GM12878 (cell line): ENCODE measurements at regions of chr1 and their contacts with region 1.

Region 1: GRCh38 chr1:182789138-182790076 is at the start of gene NPL:
- DNase-seq: peak; percentile 34
- ATAC-seq: peak; percentile 97
- H3K4me3 ChIP-seq: peak within 1 kb of the TSS; percentile 59
- H3K27ac ChIP-seq: no peak within 1 kb of the TSS
- H3K4me1 ChIP-seq: peaks cover 7% of the 10 kb centered on the region; the same call in 1 of the 2 replicates
- H3K27me3 ChIP-seq: no peaks in the 10 kb centered on the region
- CTCF ChIP-seq: no peak
- EP300 ChIP-seq: no peak
- POLR2A ChIP-seq: peak; percentile 99
- RAD21 ChIP-seq: no peak
- polyA plus RNA-seq, gene NPL: 12.6 to 15.1 TPM

Region 2: GRCh38 chr1:182446033-182446669 is 343.3 kb before region 1 on chr1:
- CTCF ChIA-PET with region 1: interaction called, 35 read pairs
- POLR2A ChIA-PET with region 1: no interaction called
- RAD21 ChIA-PET with region 1: interaction called, 24 read pairs
- SMC1A ChIA-PET with region 1: interaction called, 6 read pairs
- in situ Hi-C with region 1: loop called (anchors 5 kb)
- intact Hi-C with region 1: no loop called
- DNase-seq: peak; percentile 26
- ATAC-seq: peak; percentile 87
- H3K4me3 ChIP-seq: no peak overlapping the region
- H3K27ac ChIP-seq: no peak overlapping the region
- H3K4me1 ChIP-seq: peaks cover 15% of the 10 kb centered on the region
- H3K27me3 ChIP-seq: no peaks in the 10 kb centered on the region
- CTCF ChIP-seq: peak; percentile 60 to 80 (median 61)
- EP300 ChIP-seq: no peak
- POLR2A ChIP-seq: no peak
- RAD21 ChIP-seq: peak; percentile 90

Region 3: DNA sequence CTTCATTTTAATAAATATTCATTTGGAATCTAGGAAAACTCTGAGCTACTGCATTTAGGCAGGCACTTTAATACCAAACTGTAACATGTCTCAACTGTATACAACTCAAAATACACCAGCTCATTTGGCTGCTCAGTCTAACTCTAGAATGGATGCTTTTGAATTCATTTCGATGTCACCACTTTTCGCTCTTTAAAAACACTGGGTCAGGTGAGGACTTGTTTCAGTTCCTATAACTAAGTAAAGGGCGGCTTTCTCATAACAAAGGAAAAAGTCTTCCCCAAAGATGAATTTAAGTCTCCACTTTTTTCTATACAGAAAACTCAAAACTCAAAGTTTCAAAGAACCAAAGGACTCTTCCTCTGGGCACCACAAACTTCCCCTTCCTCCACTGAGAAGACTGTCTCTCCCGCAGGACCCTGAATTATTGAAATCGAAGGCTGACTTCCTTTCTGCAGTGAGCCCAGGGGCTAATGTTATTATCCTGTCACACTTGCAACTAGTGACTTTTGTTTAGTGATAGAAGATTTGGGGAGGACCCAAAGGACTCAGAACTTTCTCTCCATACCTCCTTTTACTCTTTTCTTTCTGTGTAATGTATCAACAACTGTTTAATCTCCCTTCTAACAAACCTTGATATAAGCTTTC is 40.0 kb after region 1 on chr1:
- CTCF ChIA-PET with region 1: interaction called, 7 read pairs
- POLR2A ChIA-PET with region 1: interaction called, 6 read pairs
- RAD21 ChIA-PET with region 1: interaction called, 11 read pairs
- SMC1A ChIA-PET with region 1: interaction called, 6 read pairs
- in situ Hi-C with region 1: no loop called
- intact Hi-C with region 1: no loop called
- DNase-seq: peak; percentile 21
- ATAC-seq: peak; percentile 95
- H3K4me3 ChIP-seq: peak overlapping the region; percentile 46; the same call in 1 of the 2 replicates
- H3K27ac ChIP-seq: no peak overlapping the region
- H3K4me1 ChIP-seq: no peaks in the 10 kb centered on the region
- H3K27me3 ChIP-seq: no peaks in the 10 kb centered on the region
- CTCF ChIP-seq: no peak
- EP300 ChIP-seq: no peak
- POLR2A ChIP-seq: no peak
- RAD21 ChIP-seq: no peak

Region 4: DNA sequence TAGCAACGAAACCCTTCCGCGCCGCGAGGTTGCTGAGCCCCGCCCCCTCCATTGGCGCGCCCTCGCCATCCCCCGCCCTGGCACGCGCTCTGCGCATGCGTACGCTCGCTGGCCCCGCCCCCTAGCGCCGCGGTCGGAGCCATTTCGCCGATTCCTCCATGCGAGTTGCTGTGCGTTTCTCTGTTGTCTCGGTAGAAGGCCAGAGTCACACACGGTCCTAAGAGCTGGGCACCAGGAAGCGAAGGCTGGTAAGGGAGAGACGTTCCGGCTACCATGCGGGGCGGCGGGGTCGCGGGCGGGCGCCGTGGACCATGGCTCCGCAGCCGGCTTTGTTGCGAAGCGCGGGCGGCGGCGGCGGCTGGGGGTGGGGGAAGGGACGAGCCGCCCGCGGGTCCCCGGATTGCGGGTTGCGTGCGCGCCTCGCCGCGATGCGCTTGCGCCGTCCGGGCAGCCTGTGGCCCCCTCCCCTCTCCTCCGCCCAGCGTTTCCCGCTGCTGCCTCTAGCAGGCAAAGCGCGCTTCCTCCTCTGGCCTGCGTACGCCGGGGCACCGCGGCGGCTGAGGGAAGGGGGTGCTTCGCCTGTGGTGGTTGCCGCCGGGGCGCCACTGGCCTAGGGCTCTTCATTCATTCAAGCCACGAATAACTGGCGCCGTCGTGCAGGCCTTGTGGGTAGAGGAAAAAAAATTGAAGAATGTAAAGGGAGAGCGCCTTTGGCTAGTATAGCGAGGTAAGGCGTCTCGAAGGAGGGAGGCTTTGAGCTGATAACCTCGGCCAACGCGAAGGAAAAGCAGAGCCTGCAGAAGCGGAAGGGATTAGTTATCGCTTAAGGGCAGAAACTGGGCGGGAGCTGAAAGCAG is 50.0 kb after region 1 on chr1 and contains the start of gene DHX9:
- CTCF ChIA-PET with region 1: interaction called, 14 read pairs
- POLR2A ChIA-PET with region 1: interaction called, 4 read pairs
- RAD21 ChIA-PET with region 1: interaction called, 7 read pairs
- SMC1A ChIA-PET with region 1: interaction called, 19 read pairs
- in situ Hi-C with region 1: no loop called
- intact Hi-C with region 1: loop called (anchors 5 kb)
- DNase-seq: peak; percentile 60
- ATAC-seq: peak; percentile 89
- H3K4me3 ChIP-seq: peak within 1 kb of the TSS; percentile 91
- H3K27ac ChIP-seq: peak within 1 kb of the TSS; percentile 81
- H3K4me1 ChIP-seq: no peaks in the 10 kb centered on the region
- H3K27me3 ChIP-seq: no peaks in the 10 kb centered on the region
- CTCF ChIP-seq: peak in 2 of 3 experiments; percentile 6 to 27; a peak in 2 of 6 replicates
- EP300 ChIP-seq: no peak
- POLR2A ChIP-seq: peak; percentile 98
- RAD21 ChIP-seq: no peak
- polyA plus RNA-seq, gene DHX9: 90.7 to 130 TPM